Uterus (tissue), 4 donors: ENCODE measurements at regions of chr2 and their contacts with region 1.

Region 1: DNA sequence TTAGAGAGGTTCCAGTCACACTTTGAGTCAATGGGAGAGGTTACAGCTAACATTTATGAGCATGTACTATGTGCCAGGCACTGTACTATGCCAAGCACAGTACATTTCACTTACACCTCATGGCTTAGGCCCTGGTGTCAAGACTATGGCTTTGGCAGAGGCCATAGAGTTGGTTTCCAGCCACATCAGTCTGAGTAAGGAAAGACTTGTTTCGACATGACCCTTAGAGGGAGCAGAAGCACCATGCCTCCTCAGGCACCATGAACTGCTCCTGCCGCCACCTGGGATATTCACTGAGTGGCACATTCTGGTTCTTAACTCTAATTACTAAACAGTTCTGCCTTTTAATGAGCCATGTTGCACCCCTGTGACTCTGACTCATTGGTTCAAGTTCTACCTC is 12.7 kb downstream of the DGUOK start:
- DNase-seq: no peak
- H3K4me3 ChIP-seq: no peak overlapping the region
- H3K27ac ChIP-seq: no peak overlapping the region
- H3K4me1 ChIP-seq: peaks cover 0 to 4% of the 10 kb centered on the region in 2 donors
- H3K27me3 ChIP-seq: no peaks in the 10 kb centered on the region
- CTCF ChIP-seq: no peak
- POLR2A ChIP-seq: no peak

Region 2: GRCh38 chr2:74002487-74003391 is 63.3 kb after region 1 on chr2:
- intact Hi-C with region 1: loop called (anchors 10 kb)
- DNase-seq: peak; percentile 77 to 82
- H3K4me3 ChIP-seq: peak overlapping the region; percentile 55 to 59
- H3K27ac ChIP-seq: peak overlapping the region; percentile 60 to 75
- H3K4me1 ChIP-seq: peaks cover 0 to 27% of the 10 kb centered on the region in 2 donors
- H3K27me3 ChIP-seq: no peaks in the 10 kb centered on the region
- CTCF ChIP-seq: peak in 2 of 4 experiments; percentile 29 to 50
- POLR2A ChIP-seq: peak; percentile 75 to 87